Activated T-helper 1 cell treated with anti-CD3 and anti-CD28 coated beads, Interleukin-12 subunit alpha, Interleukin-12 subunit beta, Interleukin-2, Interleukin-4 antibody, amounts not matched to agents 30 ng/mL and 10 ng/mL and 1 ng/mL, durations not matched to agents 14 hours and 24 hours and 36 hours (primary cell): ENCODE measurements at regions of chr16 and their contacts with region 1.

Region 1: GRCh38 chr16:3166510-3166895 is 21.5 kb upstream of the OR1F1 start:
- DNase-seq: no peak
- H3K4me3 Mint-ChIP-seq: no peak overlapping the region
- H3K27ac Mint-ChIP-seq: no peak overlapping the region
- H3K4me1 Mint-ChIP-seq: peaks cover 28% of the 10 kb centered on the region
- H3K27me3 Mint-ChIP-seq: peaks cover 33% of the 10 kb centered on the region

Region 2: DNA sequence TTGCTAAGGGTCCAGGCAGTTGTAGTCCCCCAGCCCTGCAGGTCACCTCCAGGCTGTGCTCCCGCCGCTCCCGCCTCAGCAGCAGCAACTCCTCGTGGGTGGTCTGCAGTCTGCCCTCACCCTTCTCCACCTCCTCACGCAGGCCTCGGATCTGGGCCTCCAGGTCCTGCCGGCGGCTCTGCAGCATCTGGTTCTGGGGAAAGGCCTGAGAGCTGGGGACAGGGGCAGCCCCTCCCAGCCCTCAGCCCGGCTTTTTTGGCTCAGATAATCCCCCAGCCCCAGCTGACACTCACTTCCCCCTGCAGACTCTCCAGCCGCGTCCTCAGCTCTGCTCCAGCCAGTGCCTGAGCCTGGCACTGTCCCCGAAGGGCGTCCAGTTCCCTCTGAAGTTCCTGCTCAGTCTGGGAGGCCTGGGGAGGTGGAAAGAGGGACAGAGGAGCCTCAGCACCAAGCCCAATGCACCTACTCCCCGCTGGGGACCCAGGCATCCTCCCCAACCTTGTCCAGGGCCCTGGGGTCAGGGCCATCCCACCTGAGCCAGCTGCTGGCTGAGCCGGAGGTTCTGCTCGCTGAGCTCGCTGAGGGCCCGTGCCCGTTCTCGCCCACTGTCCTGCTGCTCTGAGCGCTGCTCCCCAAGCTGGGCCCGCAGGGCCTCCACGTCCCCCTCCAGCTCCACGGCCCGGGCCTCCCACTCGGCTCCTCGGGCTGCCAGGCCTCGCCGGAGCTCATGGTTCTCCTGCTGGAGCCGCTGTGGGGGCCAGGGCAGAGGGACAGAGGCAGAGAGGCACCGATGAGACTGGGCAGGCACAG is 135.9 kb before region 1 on chr16:
- intact Hi-C with region 1: loop called (anchors 1 kb)
- DNase-seq: no peak
- H3K4me3 Mint-ChIP-seq: no peak overlapping the region
- H3K27ac Mint-ChIP-seq: peak overlapping the region; percentile 61
- H3K4me1 Mint-ChIP-seq: peaks cover 30% of the 10 kb centered on the region
- H3K27me3 Mint-ChIP-seq: peaks cover 45% of the 10 kb centered on the region

Region 3: DNA sequence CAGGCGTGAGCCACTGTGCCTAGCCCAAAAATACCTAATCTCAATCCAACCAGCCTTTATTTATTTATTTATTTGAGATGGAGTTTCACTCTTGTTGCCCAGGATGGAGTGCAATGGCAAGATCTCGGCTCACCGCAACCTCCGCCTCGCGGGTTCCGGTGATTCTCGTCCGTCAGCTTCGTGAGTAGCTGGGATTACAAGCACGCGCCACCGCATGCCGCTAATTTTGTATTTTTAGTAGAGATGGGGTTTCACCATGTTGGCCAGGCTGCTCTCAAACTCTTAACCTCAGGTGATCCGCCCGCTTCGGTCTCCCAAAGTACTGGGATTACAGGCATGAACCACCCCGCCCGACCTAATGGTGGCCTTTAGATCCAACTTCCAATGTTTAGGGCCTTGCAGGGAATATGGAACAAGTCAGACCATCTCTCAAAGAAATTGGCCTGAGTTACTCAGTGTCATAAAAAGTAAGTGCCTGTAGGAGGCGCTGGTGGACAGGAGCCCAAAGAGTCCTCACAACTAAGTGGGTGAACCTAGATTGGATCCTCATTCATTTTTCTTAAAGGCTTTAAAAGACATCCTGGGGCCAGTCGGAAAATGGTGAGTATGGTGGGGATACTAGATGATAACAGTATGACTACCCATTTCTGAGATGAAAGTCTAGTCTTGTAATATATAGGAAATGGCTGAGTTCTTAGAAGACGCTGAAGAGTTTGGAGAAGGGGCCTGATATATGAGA is 72.0 kb before region 1 on chr16:
- intact Hi-C with region 1: loop called (anchors 1 kb)
- DNase-seq: no peak
- H3K4me3 Mint-ChIP-seq: peak overlapping the region; percentile 1
- H3K27ac Mint-ChIP-seq: peak overlapping the region; percentile 67
- H3K4me1 Mint-ChIP-seq: peaks cover 25% of the 10 kb centered on the region
- H3K27me3 Mint-ChIP-seq: no peaks in the 10 kb centered on the region

Region 4: DNA sequence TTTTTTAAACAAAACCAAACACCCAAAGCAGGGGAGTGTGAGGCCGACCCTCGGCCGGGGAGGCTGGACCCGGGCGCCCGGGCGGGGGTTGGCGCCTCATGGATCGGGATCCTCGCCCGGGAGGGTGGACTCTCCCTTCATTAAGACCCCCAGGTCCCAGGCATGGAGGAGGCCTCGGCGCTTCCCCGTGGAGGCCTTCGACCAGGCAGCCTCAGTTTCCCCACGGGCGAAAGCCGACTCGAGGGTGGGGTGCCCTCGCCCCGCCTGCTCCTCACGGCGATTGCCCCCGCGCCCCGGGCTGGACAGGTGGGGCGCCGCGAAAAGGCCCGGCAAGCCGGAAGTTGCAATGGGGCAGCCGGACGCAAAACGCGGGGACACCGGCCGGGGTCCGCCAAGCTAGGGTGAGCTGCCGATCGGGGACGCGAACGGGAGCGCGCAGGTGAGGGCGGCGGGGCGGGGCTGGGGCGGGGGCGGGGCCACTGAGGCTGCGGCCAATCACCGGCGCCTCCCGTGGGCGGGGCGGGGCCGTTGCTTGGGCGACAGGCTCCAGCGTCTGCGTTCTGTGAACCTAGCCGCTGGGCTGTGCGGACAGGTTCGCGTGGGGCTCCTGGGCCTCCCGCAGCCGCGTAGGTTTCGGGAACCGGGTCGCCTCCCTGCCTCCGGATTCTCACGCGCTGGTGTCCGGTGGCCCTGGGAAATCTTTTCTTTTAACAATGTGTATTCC is 60.1 kb before region 1 on chr16:
- intact Hi-C with region 1: loop called (anchors 1 kb)
- DNase-seq: peak; percentile 88
- H3K4me3 Mint-ChIP-seq: peak overlapping the region; percentile 85
- H3K27ac Mint-ChIP-seq: peak overlapping the region; percentile 95
- H3K4me1 Mint-ChIP-seq: peaks cover 22% of the 10 kb centered on the region
- H3K27me3 Mint-ChIP-seq: no peaks in the 10 kb centered on the region

Region 5: DNA sequence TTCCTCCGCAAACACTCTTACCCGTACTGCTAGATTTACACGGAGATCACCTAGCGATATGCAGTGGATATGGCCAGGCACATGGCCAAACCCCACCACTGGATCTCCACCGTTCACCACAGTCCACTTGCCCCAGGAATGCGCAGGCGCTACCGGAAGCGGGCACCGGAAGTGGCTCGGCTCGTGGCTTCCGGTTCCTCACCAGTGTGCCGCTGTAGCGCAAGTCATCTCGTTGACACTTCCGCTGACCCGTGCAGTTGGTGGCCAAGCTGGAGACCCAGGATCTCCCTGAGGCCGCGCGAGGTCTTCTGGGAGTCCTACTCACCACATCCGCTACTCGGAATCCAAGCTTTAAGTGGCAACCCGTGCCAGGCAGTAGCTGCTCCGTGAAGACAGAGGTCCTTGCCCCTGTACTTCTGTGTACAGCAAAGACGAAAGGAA is 265.3 kb after region 1 on chr16:
- intact Hi-C with region 1: no loop called
- DNase-seq: no peak
- H3K4me3 Mint-ChIP-seq: no peak overlapping the region
- H3K27ac Mint-ChIP-seq: no peak overlapping the region
- H3K4me1 Mint-ChIP-seq: peaks cover 13% of the 10 kb centered on the region
- H3K27me3 Mint-ChIP-seq: peaks cover 2% of the 10 kb centered on the region